Mammary epithelial cell (primary cell): ENCODE measurements at regions of chr11 and their contacts with region 1.

Region 1: DNA sequence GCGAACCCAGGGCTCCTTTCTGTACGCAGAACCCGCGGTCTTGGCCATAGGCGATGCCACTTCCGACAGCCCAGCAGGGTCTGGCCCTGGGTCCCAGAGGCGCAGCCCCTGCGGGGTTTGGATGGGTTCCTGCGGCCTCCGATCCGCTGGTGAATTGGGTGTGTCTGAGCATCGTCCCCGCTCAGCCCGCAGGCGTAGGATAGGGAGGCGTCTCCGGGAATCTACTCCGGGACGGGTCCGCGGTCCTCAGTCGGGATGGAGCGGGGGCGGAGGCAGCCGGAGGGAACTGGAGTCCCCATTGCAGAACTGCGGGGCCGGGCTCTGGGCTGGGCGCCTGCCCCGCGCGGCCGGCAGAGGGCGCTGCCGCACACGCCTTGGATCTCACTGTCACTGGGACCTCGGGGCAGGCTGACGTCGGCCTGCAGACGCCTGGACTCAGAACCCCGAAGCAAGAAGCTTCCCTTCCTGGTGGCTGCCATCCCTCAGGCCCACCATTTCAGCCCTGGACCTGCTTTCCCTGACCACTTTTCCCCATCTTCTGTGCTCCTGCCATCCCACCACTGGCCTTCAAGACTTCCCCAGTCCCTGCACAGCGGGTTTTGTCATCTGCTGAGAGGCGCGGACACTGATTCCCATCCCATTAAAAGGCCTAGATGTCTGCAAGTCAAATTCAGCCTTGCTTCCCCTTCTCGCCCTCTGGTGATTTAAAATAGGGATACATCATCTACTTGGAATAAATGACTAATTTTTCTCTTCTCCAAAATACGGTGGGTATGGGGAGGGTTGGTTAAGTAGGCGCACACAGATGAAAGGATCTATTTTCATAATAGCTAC is 38.3 kb upstream of the CREB3L1 start:
- DNase-seq: peak; percentile 75
- H3K4me3 ChIP-seq: peak overlapping the region; percentile 22 to 34 (median 31)
- H3K27ac ChIP-seq: no peak overlapping the region
- H3K4me1 ChIP-seq: peaks cover 42% of the 10 kb centered on the region
- H3K27me3 ChIP-seq: no peaks in the 10 kb centered on the region
- CTCF ChIP-seq: peak; percentile 78 to 95

Region 2: DNA sequence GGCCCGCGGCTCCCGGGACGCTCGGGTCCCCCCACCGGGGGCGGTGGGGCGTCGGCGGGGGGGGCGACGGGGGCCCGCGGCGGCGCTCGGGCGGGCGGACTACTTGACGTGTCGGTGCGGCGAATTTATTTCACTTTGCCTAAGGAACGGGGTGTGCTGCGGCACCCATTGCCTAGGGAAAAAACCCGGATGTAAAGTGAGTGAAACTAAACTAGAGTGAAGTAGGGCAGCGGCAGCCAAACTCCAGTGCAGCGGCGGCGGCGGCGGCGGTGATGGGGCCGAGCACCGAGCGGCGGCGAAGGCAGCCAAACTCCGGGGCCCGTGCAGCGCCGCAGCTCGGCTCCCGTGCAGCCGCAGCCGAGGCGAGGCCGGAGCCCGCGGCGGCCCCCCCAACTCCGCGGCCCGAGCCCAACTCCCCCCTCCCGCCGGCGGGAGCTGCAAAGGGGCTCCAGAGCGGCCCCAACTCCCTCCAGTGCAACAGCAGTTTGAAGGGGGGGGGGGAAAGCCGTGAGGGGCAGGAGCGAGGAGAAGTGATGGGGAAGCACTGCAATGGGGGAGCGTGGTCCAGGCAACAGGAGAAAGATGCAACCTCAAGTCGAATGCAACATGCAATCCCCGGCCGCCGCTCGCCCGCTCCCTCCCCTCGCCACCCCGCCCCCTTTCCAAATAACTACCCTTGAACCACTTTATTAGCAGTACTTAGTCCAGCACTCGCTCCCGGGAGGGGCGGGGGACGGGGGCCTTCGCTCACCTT is 117.3 kb before region 1 on chr11:
- CTCF ChIA-PET with region 1: no interaction called
- dilution Hi-C with region 1: no loop called
- in situ Hi-C with region 1: no loop called
- intact Hi-C with region 1: loop called (anchors 1 kb)
- DNase-seq: peak; percentile 85
- H3K4me3 ChIP-seq: peak overlapping the region; percentile 66 to 77 (median 73)
- H3K27ac ChIP-seq: peak overlapping the region; percentile 18
- H3K4me1 ChIP-seq: peaks cover 11% of the 10 kb centered on the region
- H3K27me3 ChIP-seq: no peaks in the 10 kb centered on the region
- CTCF ChIP-seq: no peak

Region 3: DNA sequence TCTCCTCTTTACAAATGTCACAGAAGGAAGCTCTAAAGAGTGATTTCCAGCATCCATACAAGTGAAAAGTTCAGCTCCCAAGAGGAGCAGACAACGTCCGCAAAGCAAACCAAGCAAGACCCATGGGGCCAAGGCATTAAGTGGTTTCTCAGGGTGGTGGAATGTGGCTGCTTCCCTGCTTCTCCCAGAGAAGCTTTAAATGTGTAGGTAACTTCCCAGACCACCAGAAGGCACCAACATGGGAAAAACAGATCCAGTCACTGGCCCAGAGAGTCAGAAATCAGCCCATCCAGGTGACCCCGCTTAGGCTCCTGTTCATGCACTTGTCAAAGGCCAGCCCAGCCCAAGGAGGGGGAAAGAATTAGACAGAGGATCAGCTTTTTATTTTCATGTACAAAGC is 104.6 kb before region 1 on chr11:
- CTCF ChIA-PET with region 1: no interaction called
- dilution Hi-C with region 1: loop called (anchors 5 kb)
- in situ Hi-C with region 1: no loop called
- intact Hi-C with region 1: no loop called
- DNase-seq: no peak
- H3K4me3 ChIP-seq: no peak overlapping the region
- H3K27ac ChIP-seq: no peak overlapping the region
- H3K4me1 ChIP-seq: no peaks in the 10 kb centered on the region
- H3K27me3 ChIP-seq: no peaks in the 10 kb centered on the region
- CTCF ChIP-seq: no peak

Region 4: GRCh38 chr11:46308631-46309419 is 69.6 kb after region 1 on chr11:
- CTCF ChIA-PET with region 1: no interaction called
- dilution Hi-C with region 1: no loop called
- in situ Hi-C with region 1: no loop called
- intact Hi-C with region 1: loop called (anchors 1 kb)
- DNase-seq: peak; percentile 38
- H3K4me3 ChIP-seq: no peak overlapping the region
- H3K27ac ChIP-seq: no peak overlapping the region
- H3K4me1 ChIP-seq: peaks cover 2% of the 10 kb centered on the region
- H3K27me3 ChIP-seq: no peaks in the 10 kb centered on the region
- CTCF ChIP-seq: peak; percentile 94

Region 5: DNA sequence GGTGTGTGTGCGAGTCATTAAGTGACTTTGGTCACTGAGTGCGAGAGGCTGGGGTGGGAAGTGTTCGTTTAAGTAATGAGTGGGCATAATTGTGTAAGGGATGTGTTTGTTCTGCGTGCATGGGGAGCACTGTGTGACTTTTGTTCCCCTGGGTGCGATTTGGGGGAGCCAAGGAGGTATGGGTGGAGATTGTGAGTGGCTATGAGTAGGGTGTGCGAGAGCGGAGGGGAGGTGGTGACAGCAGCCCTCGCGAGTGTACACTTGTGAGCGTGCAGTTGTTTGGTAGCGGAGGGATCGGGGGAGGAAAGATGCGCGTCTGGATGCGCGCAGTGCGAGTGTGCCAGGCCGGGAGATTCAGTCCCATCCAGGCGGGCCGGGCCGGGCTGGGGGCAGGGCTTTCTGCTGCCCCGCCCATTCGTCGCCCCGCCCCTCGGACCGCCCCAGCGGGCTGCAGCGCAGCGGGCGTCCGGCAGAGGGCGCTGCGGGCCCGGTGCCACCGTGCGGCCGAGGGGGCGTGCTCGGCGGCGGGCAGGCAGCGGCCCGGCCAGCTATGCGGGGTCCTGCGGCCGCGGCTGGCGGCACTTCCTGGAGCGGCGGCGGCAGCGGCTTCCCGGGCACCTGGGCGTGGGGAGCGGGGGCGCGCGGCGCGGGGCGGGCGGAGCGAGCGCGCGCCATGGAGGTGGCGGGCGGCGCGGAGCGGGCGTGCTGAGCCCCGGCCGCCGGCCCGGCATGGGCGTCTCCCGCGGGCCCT is 107.9 kb after region 1 on chr11 and contains the start of gene DGKZ:
- CTCF ChIA-PET with region 1: no interaction called
- dilution Hi-C with region 1: loop called (anchors 10 kb)
- in situ Hi-C with region 1: no loop called
- intact Hi-C with region 1: no loop called
- DNase-seq: peak; percentile 81
- H3K4me3 ChIP-seq: peak within 1 kb of the TSS; percentile 73 to 93 (median 92)
- H3K27ac ChIP-seq: peak within 1 kb of the TSS; percentile 44
- H3K4me1 ChIP-seq: peaks cover 49% of the 10 kb centered on the region
- H3K27me3 ChIP-seq: no peaks in the 10 kb centered on the region
- CTCF ChIP-seq: peak; percentile 52 to 62
- total RNA-seq, gene DGKZ: 80.7 to 83.6 TPM

Region 6: DNA sequence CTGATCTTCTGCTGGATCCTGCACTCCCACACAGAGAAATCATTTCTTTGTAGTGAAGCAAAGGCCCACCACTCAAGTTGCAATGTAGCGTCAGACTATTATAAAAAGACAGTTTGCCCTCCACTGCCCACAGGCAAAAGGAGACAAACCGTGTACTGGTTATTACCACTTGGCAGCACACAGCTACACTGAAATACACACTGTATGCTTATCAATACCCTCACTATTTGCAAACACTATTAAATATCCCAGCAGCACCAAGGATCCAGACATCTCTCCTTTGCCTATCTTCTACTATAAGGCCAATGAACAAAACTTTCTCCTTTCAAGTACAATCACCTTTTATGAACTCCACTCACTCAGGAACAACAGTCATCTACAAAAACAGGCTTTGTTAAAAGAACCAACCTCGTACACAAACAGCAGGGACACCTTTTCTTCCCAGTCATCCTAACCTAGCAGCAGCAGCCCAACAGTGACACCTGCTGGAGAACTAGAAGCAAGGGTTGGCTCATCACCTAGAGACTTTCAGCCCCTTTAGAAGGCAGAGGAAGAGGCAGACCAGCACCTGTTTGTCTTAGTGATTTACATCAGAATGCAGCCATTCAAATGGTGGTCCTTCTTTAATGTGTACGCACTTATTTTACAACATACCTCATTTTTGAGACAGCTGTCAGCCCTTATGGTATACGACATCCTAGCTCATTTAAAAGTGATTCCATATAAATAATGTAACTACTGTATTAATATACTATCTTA is 298.5 kb after region 1 on chr11:
- CTCF ChIA-PET with region 1: no interaction called
- dilution Hi-C with region 1: no loop called
- in situ Hi-C with region 1: no loop called
- intact Hi-C with region 1: loop called (anchors 5 kb)
- DNase-seq: peak; percentile 76
- H3K4me3 ChIP-seq: no peak overlapping the region
- H3K27ac ChIP-seq: peak overlapping the region; percentile 19
- H3K4me1 ChIP-seq: peaks cover 5% of the 10 kb centered on the region
- H3K27me3 ChIP-seq: no peaks in the 10 kb centered on the region
- CTCF ChIP-seq: peak; percentile 98 to 99